ENCODE measurements at regions of chr14 and their contacts with region 1.

Region 1: DNA sequence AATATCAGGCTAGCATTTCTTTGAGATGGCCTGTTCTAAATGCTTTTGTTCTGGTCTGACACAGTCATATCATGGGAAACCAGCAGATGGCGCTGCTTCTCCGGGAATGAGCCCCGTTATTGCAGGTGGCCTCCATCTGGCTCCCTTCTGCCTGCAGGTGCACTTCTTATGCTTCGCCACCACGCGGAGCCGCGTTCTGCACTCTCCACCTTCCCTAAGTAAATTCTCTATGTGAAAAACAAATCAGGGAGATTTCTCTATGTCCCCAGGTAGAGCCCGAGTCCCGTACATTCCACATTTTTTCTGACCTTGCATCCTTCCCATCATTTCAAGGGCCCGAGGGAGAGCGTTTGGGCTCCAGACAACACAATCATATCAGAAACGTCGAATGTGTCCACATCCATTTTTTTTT is 26.2 kb downstream of the GLRX5 start:
- DNase-seq: peak; percentile 86
- H3K4me3 ChIP-seq: no peak overlapping the region
- H3K27ac ChIP-seq: no peak overlapping the region
- H3K4me1 ChIP-seq: no peaks in the 10 kb centered on the region
- H3K27me3 ChIP-seq: no peaks in the 10 kb centered on the region
- CTCF ChIP-seq: peak; percentile 90 to 96
- POLR2A ChIP-seq: no peak

Region 2: GRCh38 chr14:94926176-94926575 is 634.8 kb before region 1 on chr14:
- CTCF ChIA-PET with region 1: no interaction called
- POLR2A ChIA-PET with region 1: no interaction called
- dilution Hi-C with region 1: no loop called
- intact Hi-C with region 1: no loop called
- DNase-seq: no peak
- H3K4me3 ChIP-seq: no peak overlapping the region
- H3K27ac ChIP-seq: no peak overlapping the region
- H3K4me1 ChIP-seq: no peaks in the 10 kb centered on the region
- H3K27me3 ChIP-seq: no peaks in the 10 kb centered on the region
- CTCF ChIP-seq: no peak
- POLR2A ChIP-seq: no peak

Region 3: GRCh38 chr14:95495538-95496025 is 65.4 kb before region 1 on chr14:
- CTCF ChIA-PET with region 1: no interaction called
- POLR2A ChIA-PET with region 1: no interaction called
- dilution Hi-C with region 1: no loop called
- intact Hi-C with region 1: no loop called
- DNase-seq: peak; percentile 68
- H3K4me3 ChIP-seq: no peak overlapping the region
- H3K27ac ChIP-seq: peak overlapping the region; percentile 57
- H3K4me1 ChIP-seq: peaks cover 27% of the 10 kb centered on the region
- H3K27me3 ChIP-seq: no peaks in the 10 kb centered on the region
- CTCF ChIP-seq: no peak
- POLR2A ChIP-seq: no peak

Region 4: GRCh38 chr14:95609387-95609990 is 48.5 kb after region 1 on chr14:
- CTCF ChIA-PET with region 1: interaction called, 5 read pairs
- POLR2A ChIA-PET with region 1: no interaction called
- dilution Hi-C with region 1: no loop called
- intact Hi-C with region 1: loop called (anchors 1 kb)
- DNase-seq: peak; percentile 29
- H3K4me3 ChIP-seq: no peak overlapping the region
- H3K27ac ChIP-seq: no peak overlapping the region
- H3K4me1 ChIP-seq: no peaks in the 10 kb centered on the region
- H3K27me3 ChIP-seq: no peaks in the 10 kb centered on the region
- CTCF ChIP-seq: peak; percentile 43 to 64
- POLR2A ChIP-seq: no peak

Region 5: DNA sequence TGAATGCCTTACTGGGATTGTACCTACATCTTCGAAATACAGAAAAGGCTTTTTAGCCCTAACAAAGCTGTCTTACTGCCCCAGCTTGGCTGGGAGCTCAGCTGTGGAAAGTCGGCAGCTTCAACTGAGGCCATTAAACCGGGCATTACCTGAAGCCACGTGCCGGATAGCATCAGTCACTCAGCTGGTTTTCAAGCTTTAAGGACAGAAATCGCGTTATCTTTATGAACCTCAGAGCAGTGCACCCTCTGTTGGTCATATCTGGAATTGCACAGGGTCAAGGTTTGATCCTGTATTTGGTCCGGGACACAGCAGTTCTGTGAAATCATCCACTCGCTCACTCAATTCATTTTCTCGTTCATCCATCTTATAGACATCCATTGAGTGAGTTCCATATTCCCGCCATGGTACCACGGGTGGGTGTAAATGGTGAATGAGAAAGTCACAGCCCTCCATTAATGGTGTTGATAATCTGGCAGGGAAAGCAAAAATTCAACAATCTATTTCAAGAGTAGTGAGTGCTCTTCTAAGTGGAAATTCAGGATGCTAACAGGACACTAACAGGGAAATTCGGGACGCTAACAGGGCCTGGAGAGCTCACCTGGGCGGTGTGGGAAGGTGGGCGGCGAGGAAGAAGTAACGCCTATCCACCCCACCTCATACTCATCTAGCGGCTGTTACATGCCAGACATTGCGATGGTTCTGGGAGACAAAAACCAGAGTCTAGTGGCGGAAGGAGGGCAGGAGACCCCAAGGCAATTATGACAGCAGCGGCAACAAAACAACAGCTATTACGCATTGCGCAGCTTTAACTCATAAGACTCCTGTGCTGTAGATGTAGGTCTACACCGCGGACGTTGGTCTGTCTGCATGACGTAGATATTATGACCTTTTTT is 213.5 kb after region 1 on chr14:
- CTCF ChIA-PET with region 1: interaction called, 100 read pairs
- POLR2A ChIA-PET with region 1: no interaction called
- dilution Hi-C with region 1: no loop called
- intact Hi-C with region 1: loop called (anchors 1 kb)
- DNase-seq: peak; percentile 55
- H3K4me3 ChIP-seq: no peak overlapping the region
- H3K27ac ChIP-seq: no peak overlapping the region
- H3K4me1 ChIP-seq: no peaks in the 10 kb centered on the region
- H3K27me3 ChIP-seq: no peaks in the 10 kb centered on the region
- CTCF ChIP-seq: peak; percentile 76 to 85
- POLR2A ChIP-seq: no peak

Region 6: GRCh38 chr14:96100161-96101029 is 539.4 kb after region 1 on chr14:
- CTCF ChIA-PET with region 1: no interaction called
- POLR2A ChIA-PET with region 1: no interaction called
- dilution Hi-C with region 1: no loop called
- intact Hi-C with region 1: loop called (anchors 1 kb)
- DNase-seq: peak; percentile 64
- H3K4me3 ChIP-seq: no peak overlapping the region
- H3K27ac ChIP-seq: no peak overlapping the region
- H3K4me1 ChIP-seq: no peaks in the 10 kb centered on the region
- H3K27me3 ChIP-seq: no peaks in the 10 kb centered on the region
- CTCF ChIP-seq: peak; percentile 81 to 83
- POLR2A ChIP-seq: no peak

Region 7: DNA sequence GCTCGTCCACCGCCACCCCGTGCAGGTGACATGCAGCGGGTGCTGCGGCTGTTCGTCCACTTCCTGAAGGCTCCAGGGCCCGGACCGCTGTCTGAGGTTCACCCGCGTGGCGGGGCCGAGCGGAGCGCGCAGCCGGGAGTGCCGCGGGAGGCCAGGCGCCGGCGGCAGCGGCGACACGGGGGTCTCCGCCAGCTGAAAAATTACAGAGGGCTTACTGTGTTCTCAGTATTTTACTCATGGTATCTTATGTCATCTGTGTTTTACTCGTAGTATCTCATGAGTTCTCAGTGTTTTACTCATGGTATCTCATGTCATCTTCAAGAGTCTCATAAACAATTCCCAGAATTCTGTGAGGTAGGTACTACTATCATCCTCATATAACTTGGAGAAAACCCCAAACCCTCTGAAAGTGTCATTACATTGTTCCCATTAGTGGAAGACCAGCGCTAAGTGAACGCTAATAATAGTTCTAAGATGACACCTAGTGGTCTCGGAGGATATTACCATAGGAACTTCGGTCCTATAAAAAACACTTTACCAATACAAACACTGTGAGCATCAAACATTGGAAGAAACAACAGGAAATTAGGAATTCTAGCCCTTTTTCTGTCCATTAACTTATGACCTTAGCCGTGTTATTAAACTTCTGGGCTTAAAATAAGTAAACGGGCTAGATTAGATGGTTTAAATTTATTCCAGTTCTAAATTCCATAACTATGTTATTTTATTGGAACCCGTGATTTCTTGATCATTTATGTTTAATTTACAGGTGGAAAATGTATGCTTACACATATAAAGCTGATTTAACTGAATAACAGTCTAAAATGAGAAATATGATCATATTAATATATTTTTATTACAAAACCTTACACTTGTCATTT is 863.3 kb after region 1 on chr14:
- CTCF ChIA-PET with region 1: no interaction called
- POLR2A ChIA-PET with region 1: no interaction called
- dilution Hi-C with region 1: no loop called
- intact Hi-C with region 1: loop called (anchors 5 kb)
- DNase-seq: peak; percentile 82
- H3K4me3 ChIP-seq: peak overlapping the region; percentile 9 to 43 (median 25)
- H3K27ac ChIP-seq: no peak overlapping the region
- H3K4me1 ChIP-seq: peaks cover 7% of the 10 kb centered on the region
- H3K27me3 ChIP-seq: no peaks in the 10 kb centered on the region
- CTCF ChIP-seq: peak; percentile 41 to 48
- POLR2A ChIP-seq: no peak